Activated CD4-positive, alpha-beta memory T cell treated with anti-CD3 and anti-CD28 coated beads, Interleukin-2, amount 10 ng/mL, durations not matched to agents 7 days and 5 days (primary cell): ENCODE measurements at regions of chr5 and their contacts with region 1.

Region 1: GRCh38 chr5:543825-544674 is 19.8 kb upstream of the SLC9A3 start:
- DNase-seq: peak; percentile 71
- H3K4me3 Mint-ChIP-seq: peak overlapping the region; percentile 56
- H3K27ac Mint-ChIP-seq: peak overlapping the region; percentile 68
- H3K4me1 Mint-ChIP-seq: peaks cover 24% of the 10 kb centered on the region
- H3K27me3 Mint-ChIP-seq: peaks cover 11% of the 10 kb centered on the region

Region 2: GRCh38 chr5:437281-437771 is 106.7 kb before region 1 on chr5:
- CTCF ChIA-PET with region 1: no interaction called
- POLR2A ChIA-PET with region 1: no interaction called
- DNase-seq: no peak
- H3K4me3 Mint-ChIP-seq: no peak overlapping the region
- H3K27ac Mint-ChIP-seq: no peak overlapping the region
- H3K4me1 Mint-ChIP-seq: peaks cover 8% of the 10 kb centered on the region
- H3K27me3 Mint-ChIP-seq: no peaks in the 10 kb centered on the region

Region 3: DNA sequence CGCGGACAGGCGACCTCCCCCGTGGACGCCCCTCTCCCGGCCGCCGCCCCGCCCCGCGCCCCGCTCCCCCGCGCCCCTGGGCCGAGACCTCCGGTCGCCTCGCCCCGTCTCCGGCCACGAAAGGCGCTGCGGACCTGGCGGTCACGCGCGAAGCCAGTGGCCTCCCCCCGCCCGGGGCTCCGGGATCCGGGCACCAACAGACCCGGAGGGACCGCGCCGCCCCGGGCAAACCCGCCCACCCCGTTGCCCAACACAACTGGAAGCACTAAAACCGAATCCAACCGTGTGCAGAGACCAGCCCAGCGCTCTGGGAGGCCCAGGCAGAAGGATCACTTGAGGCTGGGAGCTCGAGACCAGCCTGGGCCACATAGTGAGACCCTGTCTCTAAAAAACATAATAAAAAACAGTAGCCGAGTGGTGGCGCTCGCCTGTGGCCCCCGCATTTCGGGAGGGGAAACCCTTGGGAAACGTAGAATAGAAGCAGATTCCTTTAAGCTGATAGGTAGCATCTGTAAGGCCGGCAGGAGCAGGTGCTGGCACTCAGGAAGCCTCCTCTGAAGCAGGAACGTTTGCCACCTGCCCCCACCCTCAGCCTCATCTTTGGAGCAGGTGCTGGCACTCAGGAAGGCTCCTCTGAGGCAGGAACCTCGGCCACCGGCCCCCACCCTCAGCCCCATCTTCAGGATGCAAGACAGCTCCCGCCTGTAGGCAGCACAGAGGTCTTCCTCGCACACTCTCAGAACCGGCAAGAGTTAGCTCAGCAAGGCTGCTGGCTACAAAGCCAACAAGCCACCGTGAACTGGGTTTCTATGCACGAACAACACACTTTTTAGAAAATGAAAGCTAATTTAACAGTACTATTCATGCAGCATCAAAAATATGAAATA is 15.2 kb before region 1 on chr5:
- CTCF ChIA-PET with region 1: no interaction called
- POLR2A ChIA-PET with region 1: interaction called, 10 read pairs
- DNase-seq: no peak
- H3K4me3 Mint-ChIP-seq: no peak overlapping the region
- H3K27ac Mint-ChIP-seq: no peak overlapping the region
- H3K4me1 Mint-ChIP-seq: peaks cover 40% of the 10 kb centered on the region
- H3K27me3 Mint-ChIP-seq: peaks cover 61% of the 10 kb centered on the region

Region 4: GRCh38 chr5:565782-566440 is 21.9 kb after region 1 on chr5:
- CTCF ChIA-PET with region 1: no interaction called
- POLR2A ChIA-PET with region 1: no interaction called
- DNase-seq: peak; percentile 16
- H3K4me3 Mint-ChIP-seq: no peak overlapping the region
- H3K27ac Mint-ChIP-seq: no peak overlapping the region
- H3K4me1 Mint-ChIP-seq: no peaks in the 10 kb centered on the region
- H3K27me3 Mint-ChIP-seq: peaks cover 16% of the 10 kb centered on the region